GM10248 (cell line): ENCODE measurements at regions of chr2 and their contacts with region 1.

Region 1: DNA sequence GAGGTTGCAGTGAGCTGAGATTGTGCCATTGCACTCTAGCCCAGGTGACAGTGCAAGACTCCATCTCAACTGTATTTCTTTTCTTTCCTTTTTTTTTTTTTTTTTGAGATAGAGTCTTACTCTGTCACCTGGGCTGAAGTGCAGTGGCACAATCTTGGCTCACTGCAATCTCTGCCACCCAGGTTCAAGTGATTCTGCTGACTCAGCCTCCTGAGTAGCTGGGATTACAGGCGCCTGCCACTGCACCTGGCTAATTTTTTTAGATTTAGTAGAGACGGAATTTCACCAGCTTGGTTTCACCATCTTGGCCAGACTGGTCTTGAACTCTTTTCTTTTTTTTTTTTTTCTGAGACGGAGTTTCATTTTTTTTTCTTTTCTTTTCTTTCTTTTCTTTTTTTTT is 41.3 kb upstream of the SATB2 start:
- DNase-seq: no peak
- CTCF ChIP-seq: no peak

Region 2: GRCh38 chr2:199477277-199477834 is 21.6 kb before region 1 on chr2:
- CTCF ChIA-PET with region 1: no interaction called
- POLR2A ChIA-PET with region 1: no interaction called
- DNase-seq: no peak
- CTCF ChIP-seq: no peak

Region 3: GRCh38 chr2:199488772-199489400 is 10.1 kb before region 1 on chr2:
- CTCF ChIA-PET with region 1: interaction called, 22 read pairs
- POLR2A ChIA-PET with region 1: no interaction called
- DNase-seq: peak; percentile 67
- CTCF ChIP-seq: peak; percentile 81